ENCODE measurements at regions of chr5 and their contacts with region 1.

Region 1: DNA sequence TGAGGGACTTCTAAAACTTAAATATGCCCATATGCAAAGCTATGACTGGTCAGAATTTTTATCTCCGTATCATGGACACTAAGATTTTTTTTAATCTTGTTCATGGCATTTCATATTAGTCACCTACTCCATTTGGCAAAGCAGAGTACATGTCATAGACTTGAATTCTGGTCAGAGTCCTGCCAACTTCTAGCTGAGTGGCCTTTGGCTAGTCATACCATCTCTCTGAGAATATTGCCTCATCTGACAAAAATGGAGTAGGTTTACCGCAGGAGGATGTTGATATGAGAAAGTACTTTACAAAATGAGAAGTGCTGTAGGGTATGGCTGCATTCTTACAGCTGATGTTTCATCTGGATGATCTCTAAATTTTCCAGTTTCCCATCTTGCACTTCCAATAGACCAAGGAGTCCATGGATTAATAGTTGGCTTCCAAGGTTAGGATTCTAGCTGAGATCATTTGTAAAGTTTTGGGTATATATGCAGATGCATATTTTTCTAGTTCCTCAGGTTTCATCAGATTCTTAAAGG is 150.8 kb upstream of the NR3C1 start:
- DNase-seq: no peak
- ATAC-seq: no peak
- H3K4me3 ChIP-seq: no peak overlapping the region
- H3K27ac ChIP-seq: peak overlapping the region; percentile 78
- H3K4me1 ChIP-seq: peaks cover 71% of the 10 kb centered on the region
- H3K27me3 ChIP-seq: no peaks in the 10 kb centered on the region
- CTCF ChIP-seq: no peak
- EP300 ChIP-seq: no peak
- POLR2A ChIP-seq: no peak
- RAD21 ChIP-seq: no peak

Region 2: GRCh38 chr5:143569213-143570082 is 15.2 kb after region 1 on chr5:
- CTCF ChIA-PET with region 1: no interaction called
- POLR2A ChIA-PET with region 1: interaction called, 13 read pairs
- in situ Hi-C with region 1: no loop called
- intact Hi-C with region 1: no loop called
- DNase-seq: peak; percentile 82
- ATAC-seq: peak; percentile 58
- H3K4me3 ChIP-seq: no peak overlapping the region; a peak in 1 of 6 replicates
- H3K27ac ChIP-seq: peak overlapping the region; percentile 66
- H3K4me1 ChIP-seq: peaks cover 37% of the 10 kb centered on the region
- H3K27me3 ChIP-seq: no peaks in the 10 kb centered on the region
- CTCF ChIP-seq: no peak
- EP300 ChIP-seq: peak in 1 of 2 experiments; percentile 67; a peak in 1 of 4 replicates
- POLR2A ChIP-seq: no peak
- RAD21 ChIP-seq: no peak

Region 3: GRCh38 chr5:143600396-143601075 is 46.3 kb after region 1 on chr5:
- CTCF ChIA-PET with region 1: interaction called, 3 read pairs
- POLR2A ChIA-PET with region 1: interaction called, 13 read pairs
- in situ Hi-C with region 1: no loop called
- intact Hi-C with region 1: loop called (anchors 2 kb)
- DNase-seq: peak; percentile 76
- ATAC-seq: peak; percentile 81
- H3K4me3 ChIP-seq: peak overlapping the region in 1 of 3 experiments; percentile 21; a peak in 1 of 6 replicates
- H3K27ac ChIP-seq: peak overlapping the region; percentile 60
- H3K4me1 ChIP-seq: peaks cover 69% of the 10 kb centered on the region
- H3K27me3 ChIP-seq: no peaks in the 10 kb centered on the region
- CTCF ChIP-seq: no peak
- EP300 ChIP-seq: peak in 1 of 2 experiments; percentile 56; a peak in 1 of 4 replicates
- POLR2A ChIP-seq: no peak
- RAD21 ChIP-seq: no peak